ENCODE measurements at regions of chr16 and their contacts with region 1.

Region 1: DNA sequence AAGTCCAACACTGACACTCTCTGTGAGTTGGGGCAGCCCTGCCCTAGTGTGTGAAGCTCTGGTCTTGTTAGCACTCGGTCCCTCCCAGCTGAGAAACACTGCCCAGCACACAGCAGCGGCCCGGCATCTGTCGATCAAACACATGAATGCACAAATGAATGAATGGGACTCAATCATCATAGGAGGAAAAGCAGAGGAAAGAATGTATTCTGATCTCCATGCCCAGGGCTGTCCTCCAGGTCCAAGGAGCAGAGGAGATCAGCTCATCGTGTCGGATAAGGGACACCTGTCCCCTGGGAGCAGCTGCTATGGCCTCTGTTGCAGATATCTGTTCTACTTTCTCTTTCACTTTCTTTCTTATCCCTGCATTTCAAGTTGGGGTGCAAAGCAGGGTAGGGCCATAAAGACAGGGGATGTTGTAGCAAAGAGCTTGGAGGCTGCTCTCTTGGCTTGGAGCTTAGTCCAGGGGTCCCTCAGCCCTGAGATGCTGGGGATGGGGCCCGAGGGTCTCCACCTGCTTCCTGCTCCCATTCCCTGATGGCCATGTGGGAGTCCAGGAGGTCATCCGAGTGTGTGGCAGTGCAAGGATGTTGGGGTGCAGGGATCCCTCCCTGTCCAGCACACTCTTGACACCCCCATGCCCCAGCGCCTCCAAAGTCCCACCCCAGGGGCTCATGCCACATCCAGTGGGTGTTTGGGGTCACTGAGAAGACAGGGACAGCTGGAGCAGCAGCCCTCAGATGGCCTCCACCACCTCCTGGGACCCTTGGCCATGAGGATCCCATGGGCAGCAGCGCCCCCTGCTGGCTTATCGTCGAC is 88.2 kb downstream of the IRF8 start:
- DNase-seq: no peak
- ATAC-seq: peak; percentile 52
- H3K4me3 ChIP-seq: peak overlapping the region; percentile 41; the same call in 1 of the 2 replicates
- H3K27ac ChIP-seq: peak overlapping the region; percentile 100
- H3K4me1 ChIP-seq: peaks cover 89% of the 10 kb centered on the region
- H3K27me3 ChIP-seq: no peaks in the 10 kb centered on the region
- CTCF ChIP-seq: peak; percentile 9 to 53 (median 34); a peak in 5 of 6 replicates
- EP300 ChIP-seq: no peak
- POLR2A ChIP-seq: no peak
- RAD21 ChIP-seq: peak; percentile 60

Region 2: GRCh38 chr16:85898521-85899442 is 88.4 kb before region 1 on chr16 and contains the start of gene IRF8:
- CTCF ChIA-PET with region 1: interaction called, 205 read pairs
- POLR2A ChIA-PET with region 1: interaction called, 28 read pairs
- RAD21 ChIA-PET with region 1: interaction called, 173 read pairs
- SMC1A ChIA-PET with region 1: interaction called, 289 read pairs
- in situ Hi-C with region 1: no loop called
- intact Hi-C with region 1: loop called (anchors 2 kb)
- DNase-seq: peak; percentile 59
- ATAC-seq: peak; percentile 77
- H3K4me3 ChIP-seq: peak within 1 kb of the TSS; percentile 99
- H3K27ac ChIP-seq: peak within 1 kb of the TSS; percentile 89
- H3K4me1 ChIP-seq: peaks cover 7% of the 10 kb centered on the region
- H3K27me3 ChIP-seq: no peaks in the 10 kb centered on the region
- CTCF ChIP-seq: no peak
- EP300 ChIP-seq: no peak
- POLR2A ChIP-seq: peak; percentile 100
- RAD21 ChIP-seq: no peak
- polyA plus RNA-seq, gene IRF8: 17.1 to 34.5 TPM

Region 3: DNA sequence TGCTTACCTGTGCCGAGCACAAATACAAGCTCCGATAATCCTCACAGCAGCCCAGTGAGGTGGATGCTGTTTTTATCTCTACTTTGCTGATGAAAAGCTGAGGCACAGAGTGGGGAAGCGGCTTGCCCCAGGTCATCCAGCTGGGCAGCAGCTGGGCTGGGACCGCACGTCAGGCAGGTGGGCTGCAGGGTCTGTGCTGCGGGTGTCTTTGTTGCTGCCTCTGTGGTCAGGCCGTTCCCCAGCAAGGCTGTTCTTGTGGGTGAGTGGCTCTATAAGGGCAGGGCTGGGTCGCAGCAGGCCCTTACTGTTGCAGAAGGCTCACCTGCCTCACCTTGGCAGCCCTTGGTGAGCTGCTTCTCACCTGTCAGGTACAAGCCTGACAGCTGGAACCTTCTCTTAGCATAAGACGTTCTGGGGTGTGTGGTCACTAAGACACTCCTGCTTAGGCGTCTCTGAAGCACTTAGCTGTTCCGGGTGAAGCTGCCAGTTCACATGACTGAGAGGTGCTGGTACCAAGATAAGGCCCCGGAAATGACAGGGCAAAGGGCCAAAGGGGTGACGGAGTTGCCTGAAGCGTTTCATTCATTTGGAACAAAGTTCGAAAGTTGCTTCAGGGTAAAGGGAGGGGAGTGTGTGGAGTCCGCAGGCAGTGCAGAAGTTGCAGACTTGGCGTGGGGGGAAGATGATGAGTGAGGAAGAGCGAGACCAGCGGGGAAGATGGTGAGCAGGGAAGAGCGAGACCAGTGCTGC is 70.8 kb before region 1 on chr16:
- CTCF ChIA-PET with region 1: interaction called, 17 read pairs
- POLR2A ChIA-PET with region 1: interaction called, 4 read pairs
- RAD21 ChIA-PET with region 1: interaction called, 4 read pairs
- SMC1A ChIA-PET with region 1: interaction called, 12 read pairs
- in situ Hi-C with region 1: no loop called
- intact Hi-C with region 1: no loop called
- DNase-seq: no peak
- ATAC-seq: peak; percentile 7; the same call in 2 of the 3 replicates
- H3K4me3 ChIP-seq: no peak overlapping the region
- H3K27ac ChIP-seq: no peak overlapping the region
- H3K4me1 ChIP-seq: peaks cover 56% of the 10 kb centered on the region
- H3K27me3 ChIP-seq: no peaks in the 10 kb centered on the region
- CTCF ChIP-seq: no peak
- EP300 ChIP-seq: no peak
- POLR2A ChIP-seq: peak; percentile 75; the same call in 1 of the 2 replicates
- RAD21 ChIP-seq: no peak

Region 4: GRCh38 chr16:85947230-85948137 is 39.7 kb before region 1 on chr16:
- CTCF ChIA-PET with region 1: interaction called, 11 read pairs
- POLR2A ChIA-PET with region 1: interaction called, 3 read pairs
- RAD21 ChIA-PET with region 1: interaction called, 10 read pairs
- SMC1A ChIA-PET with region 1: interaction called, 15 read pairs
- in situ Hi-C with region 1: no loop called
- intact Hi-C with region 1: loop called (anchors 2 kb)
- DNase-seq: peak; percentile 90
- ATAC-seq: peak; percentile 89
- H3K4me3 ChIP-seq: peak overlapping the region; percentile 69
- H3K27ac ChIP-seq: peak overlapping the region; percentile 95
- H3K4me1 ChIP-seq: peaks cover 64% of the 10 kb centered on the region
- H3K27me3 ChIP-seq: no peaks in the 10 kb centered on the region
- CTCF ChIP-seq: no peak
- EP300 ChIP-seq: peak; percentile 60 to 68; a peak in 3 of 4 replicates
- POLR2A ChIP-seq: peak; percentile 64; the same call in 1 of the 2 replicates
- RAD21 ChIP-seq: peak; percentile 28; the same call in 1 of the 2 replicates

Region 5: GRCh38 chr16:85969159-85969558 is 18.0 kb before region 1 on chr16:
- CTCF ChIA-PET with region 1: interaction called, 4 read pairs
- POLR2A ChIA-PET with region 1: no interaction called
- RAD21 ChIA-PET with region 1: interaction called, 8 read pairs
- SMC1A ChIA-PET with region 1: interaction called, 14 read pairs
- in situ Hi-C with region 1: no loop called
- intact Hi-C with region 1: no loop called
- DNase-seq: no peak
- ATAC-seq: peak; percentile 69
- H3K4me3 ChIP-seq: peak overlapping the region; percentile 44; the same call in 1 of the 2 replicates
- H3K27ac ChIP-seq: peak overlapping the region; percentile 12
- H3K4me1 ChIP-seq: peaks cover 43% of the 10 kb centered on the region
- H3K27me3 ChIP-seq: no peaks in the 10 kb centered on the region
- CTCF ChIP-seq: no peak
- EP300 ChIP-seq: no peak
- POLR2A ChIP-seq: no peak
- RAD21 ChIP-seq: no peak

Region 6: DNA sequence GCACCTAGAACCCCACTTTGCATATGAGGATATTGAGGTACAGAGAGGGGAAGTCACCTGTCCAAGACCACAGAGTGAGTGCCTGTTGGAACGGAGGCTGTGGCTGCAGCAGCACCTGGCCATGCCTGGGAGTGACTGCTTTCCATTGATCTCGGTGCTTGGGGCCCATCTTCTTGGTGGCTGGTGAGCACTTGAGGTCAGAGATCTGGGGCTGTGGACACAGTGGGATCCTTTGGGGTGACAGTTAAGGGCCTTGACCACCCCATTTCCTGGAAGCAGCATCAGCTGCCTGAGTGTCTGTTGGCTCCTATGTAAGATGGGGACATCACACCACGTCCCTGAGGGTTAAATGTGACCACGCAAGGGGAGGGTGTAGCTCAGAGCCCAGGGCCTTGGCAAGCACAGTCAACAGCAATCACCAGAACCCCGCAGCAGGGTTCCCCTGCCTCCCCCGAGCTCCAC is 23.6 kb after region 1 on chr16:
- CTCF ChIA-PET with region 1: interaction called, 100 read pairs
- POLR2A ChIA-PET with region 1: interaction called, 16 read pairs
- RAD21 ChIA-PET with region 1: interaction called, 157 read pairs
- SMC1A ChIA-PET with region 1: interaction called, 338 read pairs
- in situ Hi-C with region 1: no loop called
- intact Hi-C with region 1: loop called (anchors 1 kb)
- DNase-seq: no peak
- ATAC-seq: peak; percentile 71
- H3K4me3 ChIP-seq: no peak overlapping the region
- H3K27ac ChIP-seq: peak overlapping the region; percentile 66
- H3K4me1 ChIP-seq: peaks cover 47% of the 10 kb centered on the region
- H3K27me3 ChIP-seq: no peaks in the 10 kb centered on the region
- CTCF ChIP-seq: no peak
- EP300 ChIP-seq: peak in 1 of 2 experiments; percentile 54; a peak in 2 of 4 replicates
- POLR2A ChIP-seq: no peak
- RAD21 ChIP-seq: no peak